HEK293 (cell line): ENCODE measurements at regions of chr11 and their contacts with region 1.

Region 1: DNA sequence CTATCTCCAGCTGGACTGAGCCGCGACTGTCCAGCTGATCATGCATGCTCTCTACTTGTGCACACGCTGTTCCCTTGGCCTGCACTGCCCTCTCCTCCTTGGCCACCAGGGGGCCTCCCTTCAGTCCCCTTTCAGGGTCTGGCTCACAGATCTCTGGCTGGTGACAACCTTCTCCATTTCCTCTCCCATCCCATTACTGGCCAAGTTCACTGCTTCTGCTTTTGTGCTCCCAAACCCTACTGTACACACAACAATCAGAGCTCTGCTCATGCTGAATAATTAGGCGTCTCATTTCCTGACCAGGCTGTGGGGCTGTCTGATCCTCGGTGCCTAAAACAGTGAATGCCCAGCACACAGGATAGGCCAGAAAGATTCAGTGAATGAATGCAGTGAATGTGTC is 224.0 kb upstream of the NARS2 start:
- H3K4me3 ChIP-seq: no peak overlapping the region
- H3K27ac ChIP-seq: no peak overlapping the region
- H3K4me1 ChIP-seq: peaks cover 13% of the 10 kb centered on the region
- CTCF ChIP-seq: peak; percentile 74

Region 2: GRCh38 chr11:77981346-77981947 is 817.2 kb before region 1 on chr11:
- CTCF ChIA-PET with region 1: no interaction called
- POLR2A ChIA-PET with region 1: no interaction called
- H3K4me3 ChIP-seq: no peak overlapping the region
- H3K27ac ChIP-seq: no peak overlapping the region
- H3K4me1 ChIP-seq: no peaks in the 10 kb centered on the region
- CTCF ChIP-seq: no peak

Region 3: DNA sequence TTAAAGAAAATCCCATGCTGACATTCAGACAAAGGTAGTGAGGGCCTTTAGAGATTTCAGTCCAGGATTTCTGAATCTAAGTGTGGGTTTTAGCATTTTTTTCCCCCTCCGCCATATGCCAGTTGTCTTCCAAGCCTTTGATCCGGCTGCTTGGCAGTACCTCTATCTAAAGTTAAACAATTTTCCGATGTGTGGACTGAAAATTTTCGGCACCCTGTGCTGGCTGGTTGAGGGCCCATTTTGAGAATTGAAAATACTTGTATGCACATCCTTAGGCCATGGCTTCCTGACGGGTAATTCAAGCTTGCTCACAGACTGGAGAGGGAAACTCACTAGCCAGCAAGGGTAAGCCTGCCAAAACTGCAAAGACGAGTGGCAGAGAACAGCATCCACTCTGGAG is 92.1 kb before region 1 on chr11:
- CTCF ChIA-PET with region 1: no interaction called
- POLR2A ChIA-PET with region 1: no interaction called
- H3K4me3 ChIP-seq: no peak overlapping the region
- H3K27ac ChIP-seq: no peak overlapping the region
- H3K4me1 ChIP-seq: no peaks in the 10 kb centered on the region
- CTCF ChIP-seq: no peak

Region 4: GRCh38 chr11:78809931-78810541 is 11.4 kb after region 1 on chr11:
- CTCF ChIA-PET with region 1: interaction called, 54 read pairs
- POLR2A ChIA-PET with region 1: no interaction called
- H3K4me3 ChIP-seq: no peak overlapping the region
- H3K27ac ChIP-seq: no peak overlapping the region
- H3K4me1 ChIP-seq: 0 out of 2 replicates have a peak, but pooled peaks cover 4% of the 10 kb centered on the region
- CTCF ChIP-seq: no peak